Esophagus muscularis mucosa (tissue), 4 donors: ENCODE measurements at regions of chr6 and their contacts with region 1.

Region 1: GRCh38 chr6:105431226-105431625 is 28.3 kb upstream of the PREP start:
- DNase-seq: no peak
- H3K4me3 ChIP-seq: no peak overlapping the region
- H3K27ac ChIP-seq: no peak overlapping the region
- H3K4me1 ChIP-seq: peaks cover 0 to 14% (median 4%) of the 10 kb centered on the region in 4 donors
- H3K27me3 ChIP-seq: no peaks in the 10 kb centered on the region
- CTCF ChIP-seq: peak; percentile 46 to 56 (median 54)
- EP300 ChIP-seq: no peak
- POLR2A ChIP-seq: no peak

Region 2: GRCh38 chr6:106223300-106223930 is 792.2 kb after region 1 on chr6:
- intact Hi-C with region 1: loop called (anchors 2 kb)
- DNase-seq: no peak
- H3K4me3 ChIP-seq: no peak overlapping the region
- H3K27ac ChIP-seq: no peak overlapping the region
- H3K4me1 ChIP-seq: no peaks in the 10 kb centered on the region
- H3K27me3 ChIP-seq: no peaks in the 10 kb centered on the region
- CTCF ChIP-seq: peak; percentile 57 to 61 (median 57)
- EP300 ChIP-seq: no peak
- POLR2A ChIP-seq: no peak